ENCODE measurements at regions of chr10 and their contacts with region 1.

Region 1: DNA sequence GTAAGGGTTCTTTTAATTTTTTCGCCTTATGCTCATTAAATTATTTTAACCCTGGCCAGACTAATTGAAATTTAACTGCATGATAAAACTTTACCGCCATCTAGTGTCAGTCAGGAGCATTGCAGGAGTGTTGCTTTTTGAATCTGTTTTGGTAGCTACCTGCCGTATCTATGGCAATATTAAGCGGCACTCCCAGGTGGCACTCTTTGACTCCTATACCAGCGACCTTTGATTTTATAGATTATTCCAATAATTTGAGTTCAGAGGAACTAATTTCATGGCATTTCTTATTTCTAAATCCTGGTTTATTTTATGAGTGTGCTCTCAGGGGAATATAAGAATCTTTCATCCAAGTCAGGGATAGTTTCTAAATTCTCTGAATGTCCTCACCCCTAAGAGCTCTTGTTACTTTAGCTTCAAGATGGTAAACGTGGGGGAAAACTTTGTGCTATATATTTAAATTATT is 198.9 kb downstream of the REEP3 start:
- DNase-seq: peak; percentile 67
- H3K4me3 Mint-ChIP-seq: no peak overlapping the region
- H3K27ac Mint-ChIP-seq: no peak overlapping the region
- H3K4me1 Mint-ChIP-seq: peaks cover 10% of the 10 kb centered on the region
- H3K27me3 Mint-ChIP-seq: peaks cover 4% of the 10 kb centered on the region

Region 2: DNA sequence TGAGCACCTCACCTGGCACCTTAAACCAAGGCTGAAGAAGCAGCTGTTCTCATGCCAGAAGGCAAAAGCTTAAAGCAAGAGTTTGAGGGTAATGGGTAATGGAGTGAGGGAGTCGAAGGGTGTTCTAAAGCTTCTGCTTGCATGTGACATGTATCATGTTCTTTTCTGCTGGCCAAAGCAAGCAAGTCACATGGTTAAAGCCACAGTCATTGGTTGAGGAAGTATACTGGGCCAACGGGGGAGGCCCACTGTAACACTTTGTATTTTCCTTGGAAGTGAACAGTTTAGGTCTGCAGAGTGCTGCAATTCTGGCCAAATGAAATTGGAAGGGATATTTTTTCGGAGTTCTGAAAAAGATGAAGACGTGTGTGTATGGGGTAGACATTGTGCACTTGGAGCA is 123.2 kb before region 1 on chr10:
- CTCF ChIA-PET with region 1: no interaction called
- intact Hi-C with region 1: no loop called
- DNase-seq: no peak
- H3K4me3 Mint-ChIP-seq: no peak overlapping the region
- H3K27ac Mint-ChIP-seq: no peak overlapping the region
- H3K4me1 Mint-ChIP-seq: peaks cover 3% of the 10 kb centered on the region
- H3K27me3 Mint-ChIP-seq: no peaks in the 10 kb centered on the region

Region 3: DNA sequence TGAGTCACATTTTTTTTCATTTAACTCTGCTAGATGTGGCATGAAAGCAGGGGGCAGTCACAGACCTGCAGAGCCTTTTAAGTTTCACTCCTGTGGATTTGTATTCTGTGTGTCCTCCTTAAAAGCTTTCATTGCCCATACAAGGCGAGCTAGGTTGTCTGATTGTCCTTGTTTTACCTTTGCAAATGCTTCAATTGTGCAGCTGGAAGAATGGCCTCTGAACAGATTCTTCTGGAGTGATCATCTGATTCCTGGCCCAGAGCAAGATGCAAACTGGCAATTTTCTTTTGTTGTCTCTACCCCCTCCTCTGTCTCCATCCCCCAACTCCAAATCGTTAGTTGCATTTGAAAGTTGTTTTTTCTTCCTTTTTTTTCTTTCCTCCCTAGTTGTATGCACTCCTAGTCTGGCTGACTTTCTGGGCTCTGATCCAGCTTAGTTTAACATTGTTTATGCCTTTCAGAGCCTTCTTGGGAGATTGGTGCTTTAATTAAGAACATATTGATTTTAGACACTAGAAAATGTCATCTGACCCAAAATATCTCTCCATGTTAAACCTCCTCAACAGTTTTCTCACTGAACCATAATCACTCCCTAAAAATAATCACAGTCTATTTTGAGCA is 48.7 kb before region 1 on chr10:
- CTCF ChIA-PET with region 1: interaction called, 9 read pairs
- intact Hi-C with region 1: loop called (anchors 1 kb)
- DNase-seq: no peak
- H3K4me3 Mint-ChIP-seq: no peak overlapping the region
- H3K27ac Mint-ChIP-seq: no peak overlapping the region
- H3K4me1 Mint-ChIP-seq: peaks cover 2% of the 10 kb centered on the region
- H3K27me3 Mint-ChIP-seq: no peaks in the 10 kb centered on the region

Region 4: GRCh38 chr10:63738410-63738809 is 18.3 kb after region 1 on chr10:
- CTCF ChIA-PET with region 1: interaction called, 13 read pairs
- intact Hi-C with region 1: no loop called
- DNase-seq: no peak
- H3K4me3 Mint-ChIP-seq: no peak overlapping the region
- H3K27ac Mint-ChIP-seq: no peak overlapping the region
- H3K4me1 Mint-ChIP-seq: peaks cover 2% of the 10 kb centered on the region
- H3K27me3 Mint-ChIP-seq: peaks cover 4% of the 10 kb centered on the region

Region 5: GRCh38 chr10:63878428-63878827 is 158.3 kb after region 1 on chr10:
- CTCF ChIA-PET with region 1: no interaction called
- intact Hi-C with region 1: no loop called
- DNase-seq: no peak
- H3K4me3 Mint-ChIP-seq: no peak overlapping the region
- H3K27ac Mint-ChIP-seq: no peak overlapping the region
- H3K4me1 Mint-ChIP-seq: no peaks in the 10 kb centered on the region
- H3K27me3 Mint-ChIP-seq: peaks cover 7% of the 10 kb centered on the region

Measured in activated naive CD4-positive, alpha-beta T cell treated with anti-CD3 and anti-CD28 coated beads for 36 hours (primary cell).